ENCODE measurements at regions of chr19 and their contacts with region 1.

Region 1: DNA sequence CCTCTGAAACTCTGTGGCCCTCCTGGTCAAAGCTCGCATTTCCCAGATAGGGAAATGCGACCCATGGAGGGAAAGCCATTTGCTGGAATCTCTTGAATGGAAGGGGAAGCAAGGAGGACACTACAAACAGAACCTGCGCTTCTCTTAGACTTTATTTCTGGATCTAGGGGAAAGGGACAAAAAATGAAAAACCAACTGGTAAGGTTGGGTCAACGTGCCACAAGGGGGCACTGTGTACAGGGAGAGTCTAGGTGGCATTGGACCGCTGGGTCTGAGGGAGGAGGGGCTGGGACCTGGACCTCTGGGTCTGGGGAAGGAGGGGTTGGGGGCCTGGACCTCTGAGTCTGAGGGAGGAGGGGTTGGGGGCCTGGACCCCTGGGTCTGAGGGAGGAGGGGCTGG is 5.0 kb downstream of the KLK4 start:
- DNase-seq: peak in 1 of 2 donors; percentile 55
- ATAC-seq: peak; percentile 38 to 53 (median 42)
- H3K4me3 ChIP-seq: no peak overlapping the region
- H3K4me3 Mint-ChIP-seq: no peak overlapping the region
- H3K27ac ChIP-seq: no peak overlapping the region
- H3K27ac Mint-ChIP-seq: no peak overlapping the region
- H3K4me1 ChIP-seq: peaks cover 9% of the 10 kb centered on the region
- H3K4me1 Mint-ChIP-seq: peaks cover 0 to 10% of the 10 kb centered on the region in 2 donors
- H3K27me3 ChIP-seq: peaks cover 15% of the 10 kb centered on the region
- H3K27me3 Mint-ChIP-seq: peaks cover 39 to 43% of the 10 kb centered on the region in 2 donors
- CTCF ChIP-seq: peak; percentile 33

Region 2: GRCh38 chr19:50922317-50922853 is 16.2 kb after region 1 on chr19:
- intact Hi-C with region 1: loop called (anchors 2 kb)
- DNase-seq: peak; percentile 57 to 90
- ATAC-seq: peak; percentile 88 to 100 (median 99)
- H3K4me3 ChIP-seq: no peak overlapping the region
- H3K4me3 Mint-ChIP-seq: no peak overlapping the region
- H3K27ac ChIP-seq: no peak overlapping the region
- H3K27ac Mint-ChIP-seq: no peak overlapping the region
- H3K4me1 ChIP-seq: peaks cover 6% of the 10 kb centered on the region
- H3K4me1 Mint-ChIP-seq: peaks cover 8 to 10% of the 10 kb centered on the region in 2 donors
- H3K27me3 ChIP-seq: peaks cover 5% of the 10 kb centered on the region
- H3K27me3 Mint-ChIP-seq: peaks cover 25 to 27% of the 10 kb centered on the region in 2 donors
- CTCF ChIP-seq: peak; percentile 78